ENCODE measurements at regions of chr7 and their contacts with region 1.

Region 1: DNA sequence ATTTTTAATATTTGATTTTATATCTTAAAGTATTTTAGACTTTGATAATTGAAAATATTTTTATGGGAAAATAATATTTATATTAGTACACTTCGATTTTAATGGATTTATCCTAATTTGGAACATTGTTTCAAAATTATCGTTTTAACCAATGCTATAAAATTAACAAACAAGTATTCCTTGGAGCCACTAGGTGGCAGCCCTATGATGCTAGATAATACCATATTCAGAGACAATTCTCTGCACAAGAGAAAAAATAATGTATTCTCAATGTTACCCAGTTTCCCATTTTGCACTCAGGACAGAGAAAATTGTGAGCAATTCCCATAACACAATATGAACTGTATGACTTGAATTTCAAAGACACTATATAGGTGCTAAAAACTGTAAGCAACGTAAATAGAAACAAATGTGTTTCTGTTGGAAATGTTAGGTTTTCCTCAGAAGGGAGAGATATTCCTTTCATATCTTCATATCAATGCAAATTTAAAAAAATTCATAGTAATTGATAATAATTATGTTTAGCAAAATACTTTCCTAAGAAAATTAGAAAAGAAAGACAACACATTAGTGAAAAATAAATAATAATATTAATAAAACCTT is 237.8 kb downstream of the SEMA3E start:
- ATAC-seq: peak in 1 of 8 experiments; percentile 31
- H3K4me3 ChIP-seq: no peak overlapping the region
- H3K27ac ChIP-seq: no peak overlapping the region
- H3K4me1 ChIP-seq: peaks cover 0 to 9% of the 10 kb centered on the region in 2 donors

Region 2: DNA sequence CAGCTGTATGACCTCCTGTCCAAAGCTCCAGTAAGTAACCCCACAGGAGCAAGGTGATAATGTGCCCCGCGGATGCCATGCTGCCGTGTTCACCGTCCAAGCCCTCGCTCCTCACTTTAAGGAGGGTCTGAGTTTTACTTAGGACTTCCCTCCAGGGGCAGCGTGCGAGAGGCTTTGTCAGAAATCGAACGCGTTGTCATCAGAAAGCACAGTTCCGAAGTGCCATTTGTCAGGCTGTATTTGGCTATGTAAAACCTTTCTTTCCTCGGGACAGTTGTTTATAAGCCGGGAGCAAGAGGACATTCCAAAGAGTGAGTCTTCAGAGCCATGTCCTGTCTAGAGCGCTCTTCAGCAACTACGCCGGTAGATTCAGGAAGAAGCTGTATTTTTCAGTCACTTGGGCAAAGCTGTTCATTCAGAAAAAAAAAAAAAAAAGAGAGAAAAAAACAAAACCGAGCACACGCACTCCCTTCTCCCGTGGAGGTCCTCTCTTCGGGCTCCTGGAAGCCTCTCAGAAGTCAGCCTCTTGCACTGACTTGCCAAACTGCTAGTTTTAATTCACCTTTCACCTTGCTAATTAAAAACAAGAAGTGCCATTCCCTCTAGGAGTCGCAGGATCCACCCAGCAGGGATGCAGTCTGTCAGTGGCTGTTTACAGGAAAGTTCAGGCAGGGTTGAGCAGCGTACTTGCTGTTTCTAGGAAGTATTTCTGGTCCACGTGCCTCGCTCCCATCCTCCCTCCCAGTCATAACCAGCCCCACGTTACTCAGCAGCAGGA is 237.6 kb after region 1 on chr7 and contains the start of gene SEMA3E:
- in situ Hi-C with region 1: loop called in 6 of 9 experiments (anchors 25 kb)
- ATAC-seq: peak; percentile 85 to 96 (median 88)
- H3K4me3 ChIP-seq: peak within 1 kb of the TSS; percentile 20 to 47 (median 40)
- H3K27ac ChIP-seq: no peak within 1 kb of the TSS
- H3K4me1 ChIP-seq: peaks cover 3 to 28% of the 10 kb centered on the region in 2 donors
- total RNA-seq, gene SEMA3E: 1.2 to 14.1 (median 7.0) TPM

Region 3: GRCh38 chr7:83655951-83656556 is 245.0 kb after region 1 on chr7:
- in situ Hi-C with region 1: loop called in 6 of 9 experiments (anchors 5 to 25 kb)
- ATAC-seq: peak in 5 of 8 experiments; percentile 43 to 63 (median 62)
- H3K4me3 ChIP-seq: no peak overlapping the region
- H3K27ac ChIP-seq: no peak overlapping the region
- H3K4me1 ChIP-seq: no peaks in the 10 kb centered on the region

Region 4: DNA sequence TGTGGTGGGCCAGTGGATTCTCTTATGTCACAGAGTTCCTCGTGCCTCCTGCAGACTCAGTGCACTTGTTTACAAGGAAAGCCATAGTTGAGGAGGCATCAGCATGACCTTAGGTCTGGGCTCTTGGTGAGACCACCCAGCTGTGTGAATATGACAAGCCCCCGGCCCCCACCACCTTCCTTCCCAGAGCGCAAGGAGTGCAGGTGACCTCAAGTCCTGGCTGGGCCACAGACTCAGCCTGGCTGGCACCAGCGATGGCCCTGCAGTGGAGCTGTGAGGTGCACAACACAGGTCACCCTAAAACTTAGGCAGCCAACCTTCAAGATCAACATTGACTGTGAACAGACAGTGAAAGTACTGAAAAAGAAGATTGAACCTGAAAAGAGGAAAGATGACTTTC is 252.0 kb after region 1 on chr7:
- in situ Hi-C with region 1: loop called in 6 of 9 experiments (anchors 5 to 25 kb)
- ATAC-seq: no peak
- H3K4me3 ChIP-seq: no peak overlapping the region
- H3K27ac ChIP-seq: no peak overlapping the region
- H3K4me1 ChIP-seq: no peaks in the 10 kb centered on the region

Region 5: DNA sequence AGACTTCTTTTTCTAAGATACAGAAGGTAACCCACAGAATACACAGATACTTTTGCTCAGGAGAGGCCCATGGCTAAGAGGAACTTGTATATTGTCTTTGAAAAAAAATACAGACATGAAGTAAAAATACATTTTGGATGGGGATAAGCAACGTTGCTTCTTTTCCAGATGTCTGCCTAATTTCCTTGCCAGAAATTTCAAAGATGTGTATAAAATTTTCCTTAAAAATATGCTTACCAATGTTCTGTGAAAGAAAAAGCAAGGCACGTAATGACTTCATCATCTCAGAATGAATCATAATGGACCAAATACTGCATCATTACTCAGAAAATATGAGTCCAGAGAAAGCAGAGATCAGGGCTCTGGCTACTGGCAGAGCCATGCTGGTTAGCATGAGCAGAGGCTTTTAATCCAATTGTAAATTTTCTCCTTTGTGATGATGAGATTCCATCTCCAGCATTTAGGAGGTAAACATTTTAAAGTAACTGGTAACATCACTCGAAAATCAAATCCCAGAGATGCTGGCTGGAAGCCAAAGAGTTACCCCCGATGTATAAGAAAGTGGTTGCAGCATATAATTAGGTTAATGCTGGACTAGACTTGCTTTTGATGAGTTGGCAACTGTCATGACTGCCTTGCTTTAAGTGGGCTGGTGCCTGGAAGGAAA is 511.0 kb after region 1 on chr7:
- in situ Hi-C with region 1: loop called in 1 of 9 experiments (anchors 25 kb)
- ATAC-seq: peak in 6 of 8 experiments; percentile 31 to 95 (median 47)
- H3K4me3 ChIP-seq: no peak overlapping the region
- H3K27ac ChIP-seq: no peak overlapping the region
- H3K4me1 ChIP-seq: no peaks in the 10 kb centered on the region

Measured in motor neuron (in vitro differentiated cells).